ENCODE measurements at regions of chr3 and their contacts with region 1.

Region 1: DNA sequence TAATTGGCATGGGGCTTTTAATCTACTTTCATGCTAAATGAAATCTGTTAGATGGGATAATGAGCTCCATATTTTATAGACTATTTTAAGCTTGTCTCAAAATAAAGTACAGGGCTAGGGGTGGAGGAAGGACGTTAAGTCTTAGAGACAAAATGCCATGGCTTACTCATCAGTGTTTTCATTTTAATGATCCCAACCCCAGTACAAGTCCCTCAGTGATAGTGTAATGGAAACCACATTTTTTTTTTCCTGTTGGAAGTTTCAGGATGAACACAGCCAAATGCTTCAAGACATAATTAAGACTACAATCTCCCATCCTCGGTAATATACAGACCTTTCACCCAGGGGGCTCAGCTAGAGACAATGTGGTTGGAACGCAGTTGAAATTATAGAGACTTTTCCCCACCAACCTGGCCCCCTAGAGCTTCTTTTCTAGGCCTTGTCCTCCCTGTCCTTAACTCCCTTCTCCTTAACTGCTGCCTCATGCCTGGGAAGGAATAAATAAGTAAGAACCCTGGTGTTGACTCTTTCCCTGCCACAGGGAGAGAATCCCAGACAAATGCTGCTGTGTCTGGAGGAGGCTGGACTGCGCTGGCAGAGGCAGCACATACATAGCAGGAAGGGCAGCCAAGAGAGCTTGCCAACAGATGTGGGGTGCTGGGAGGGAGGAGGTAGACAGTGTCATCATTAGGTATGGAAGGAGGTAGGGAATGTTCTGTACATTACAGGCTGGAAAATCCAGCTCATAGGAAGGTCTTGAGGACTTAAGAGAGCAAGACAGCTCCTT is 115.4 kb upstream of the ROPN1 start:
- DNase-seq: no peak
- H3K4me3 ChIP-seq: no peak overlapping the region
- H3K27ac ChIP-seq: no peak overlapping the region
- H3K4me1 ChIP-seq: no peaks in the 10 kb centered on the region
- H3K27me3 ChIP-seq: no peaks in the 10 kb centered on the region
- CTCF ChIP-seq: no peak
- EP300 ChIP-seq: no peak
- POLR2A ChIP-seq: no peak

Region 2: DNA sequence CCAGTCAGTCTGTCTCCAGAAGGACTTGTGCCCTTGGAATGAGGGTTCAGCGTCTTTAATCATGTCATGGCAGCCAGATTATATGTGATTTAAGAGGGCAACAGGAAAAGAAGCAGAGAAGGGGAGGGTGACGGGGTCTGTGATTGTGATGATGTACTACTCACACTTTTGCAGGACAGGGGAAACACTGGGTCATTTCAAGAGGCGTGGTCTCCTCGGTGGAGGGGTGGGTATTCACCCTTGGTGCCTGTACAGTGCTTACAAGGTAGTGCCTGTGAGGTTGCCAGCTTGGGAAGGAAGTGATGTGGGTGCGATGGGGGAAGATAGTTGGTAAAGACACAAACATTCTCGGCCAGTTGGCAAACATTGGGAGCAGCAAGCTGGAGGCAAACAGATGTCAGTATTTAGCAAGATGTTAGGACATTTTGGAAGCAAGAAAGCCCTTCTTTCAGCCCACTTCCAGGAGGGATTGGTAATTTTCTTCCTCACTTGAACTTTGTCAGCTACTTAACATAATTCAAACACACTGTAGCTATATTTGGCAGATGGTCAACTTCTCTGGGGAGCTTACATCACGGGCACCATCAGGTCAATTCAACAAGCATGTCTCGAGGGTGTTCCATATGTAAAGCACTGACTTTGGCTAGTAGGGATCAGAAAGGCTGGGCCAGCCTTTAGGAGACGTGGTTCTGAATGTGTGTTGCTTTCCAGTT is 43.9 kb before region 1 on chr3:
- intact Hi-C with region 1: loop called in 1 of 4 experiments (anchors 1 kb)
- DNase-seq: no peak
- H3K4me3 ChIP-seq: no peak overlapping the region
- H3K27ac ChIP-seq: no peak overlapping the region
- H3K4me1 ChIP-seq: peaks cover 2% of the 10 kb centered on the region
- H3K27me3 ChIP-seq: no peaks in the 10 kb centered on the region
- CTCF ChIP-seq: no peak
- EP300 ChIP-seq: no peak
- POLR2A ChIP-seq: no peak

Region 3: DNA sequence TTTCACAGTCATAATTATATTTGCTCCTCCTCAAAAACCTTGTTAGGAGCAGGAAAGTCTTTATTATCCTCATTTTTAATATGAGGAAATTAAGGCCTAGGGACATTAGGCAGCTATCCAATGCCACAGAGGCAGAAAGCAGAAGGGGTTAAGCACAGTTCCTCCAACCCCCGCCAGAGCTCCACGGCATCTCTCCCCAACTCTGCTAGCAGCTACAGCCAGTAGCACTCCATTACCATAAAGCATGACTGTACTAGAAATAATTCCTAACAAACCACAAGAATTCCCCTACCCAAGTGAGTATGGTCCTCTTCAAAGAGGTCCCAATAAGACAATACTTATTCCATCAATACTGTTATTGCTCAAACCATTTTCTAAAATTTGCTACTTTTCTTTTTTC is 938.7 kb after region 1 on chr3:
- intact Hi-C with region 1: no loop called
- DNase-seq: no peak
- H3K4me3 ChIP-seq: no peak overlapping the region
- H3K27ac ChIP-seq: no peak overlapping the region
- H3K4me1 ChIP-seq: peaks cover 19% of the 10 kb centered on the region
- H3K27me3 ChIP-seq: no peaks in the 10 kb centered on the region
- CTCF ChIP-seq: no peak
- EP300 ChIP-seq: no peak
- POLR2A ChIP-seq: no peak